Ascending aorta (tissue), 2 donors: ENCODE measurements at regions of chr17 and their contacts with region 1.

Region 1: GRCh38 chr17:1087381-1088241 is 90.7 kb downstream of the TIMM22 start:
- DNase-seq: peak; percentile 47 to 90
- H3K4me3 ChIP-seq: peak overlapping the region in 1 of 2 donors; percentile 12
- H3K27ac ChIP-seq: peak overlapping the region; percentile 85 to 87
- H3K4me1 ChIP-seq: peaks cover 12 to 40% of the 10 kb centered on the region in 2 donors
- H3K27me3 ChIP-seq: no peaks in the 10 kb centered on the region
- CTCF ChIP-seq: no peak

Region 2: DNA sequence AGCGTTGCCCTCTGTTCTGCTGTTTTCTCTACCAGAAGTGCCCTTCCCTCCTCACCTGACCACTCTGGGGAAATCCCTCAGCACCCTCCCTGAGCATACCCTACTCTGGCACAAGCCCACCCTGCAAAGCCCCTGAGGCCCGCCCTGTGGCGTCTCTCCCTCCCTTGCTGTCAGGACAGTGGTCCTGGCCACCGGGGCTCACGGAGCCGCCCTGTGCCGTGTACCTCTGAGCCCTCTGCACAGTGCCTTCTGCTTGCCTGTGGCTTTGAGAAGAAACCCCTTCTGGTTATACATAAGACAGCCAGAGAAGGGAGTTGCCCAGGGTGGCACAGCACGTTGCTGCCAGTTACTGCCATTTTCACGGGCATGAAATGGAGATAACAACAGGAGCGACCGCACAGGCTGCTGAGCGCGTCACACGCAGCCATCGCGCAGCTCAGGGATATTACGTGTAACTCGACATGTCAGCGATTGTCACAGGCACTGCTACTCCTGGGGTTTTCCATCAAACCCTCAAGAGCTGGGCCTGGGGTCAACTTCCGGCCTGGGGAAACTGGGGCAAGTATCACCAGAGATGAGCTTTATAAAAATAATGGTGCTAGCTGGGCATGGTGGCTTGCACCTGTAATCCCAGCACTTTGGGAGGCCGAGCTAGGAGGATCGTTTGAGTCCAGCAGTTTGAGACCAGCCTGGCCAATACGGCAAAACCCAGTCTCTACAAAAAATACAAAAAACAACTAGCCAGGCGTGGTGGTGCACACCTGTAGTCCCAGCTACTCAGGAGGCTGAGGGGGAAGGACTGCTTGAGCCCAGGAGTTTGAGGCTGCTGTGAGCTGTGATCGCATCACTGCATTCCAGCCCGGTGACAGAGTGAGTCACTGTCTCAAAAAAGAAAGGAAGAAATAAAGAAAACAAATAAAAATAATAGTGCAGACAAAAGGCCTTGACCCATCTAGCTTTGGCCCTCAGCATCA is 935.4 kb before region 1 on chr17:
- intact Hi-C with region 1: no loop called
- DNase-seq: peak in 1 of 2 donors; percentile 42
- H3K4me3 ChIP-seq: no peak overlapping the region
- H3K27ac ChIP-seq: no peak overlapping the region
- H3K4me1 ChIP-seq: no peaks in the 10 kb centered on the region
- H3K27me3 ChIP-seq: no peaks in the 10 kb centered on the region
- CTCF ChIP-seq: no peak

Region 3: GRCh38 chr17:1108861-1109605 is 21.4 kb after region 1 on chr17:
- intact Hi-C with region 1: loop called (anchors 2 kb)
- DNase-seq: peak in 1 of 2 donors; percentile 76
- H3K4me3 ChIP-seq: peak overlapping the region; percentile 86
- H3K27ac ChIP-seq: peak overlapping the region; percentile 90 to 99
- H3K4me1 ChIP-seq: peaks cover 29 to 74% of the 10 kb centered on the region in 2 donors
- H3K27me3 ChIP-seq: no peaks in the 10 kb centered on the region
- CTCF ChIP-seq: no peak